Heart right ventricle (tissue), 16 donors: ENCODE measurements at regions of chr6 and their contacts with region 1.

Region 1: DNA sequence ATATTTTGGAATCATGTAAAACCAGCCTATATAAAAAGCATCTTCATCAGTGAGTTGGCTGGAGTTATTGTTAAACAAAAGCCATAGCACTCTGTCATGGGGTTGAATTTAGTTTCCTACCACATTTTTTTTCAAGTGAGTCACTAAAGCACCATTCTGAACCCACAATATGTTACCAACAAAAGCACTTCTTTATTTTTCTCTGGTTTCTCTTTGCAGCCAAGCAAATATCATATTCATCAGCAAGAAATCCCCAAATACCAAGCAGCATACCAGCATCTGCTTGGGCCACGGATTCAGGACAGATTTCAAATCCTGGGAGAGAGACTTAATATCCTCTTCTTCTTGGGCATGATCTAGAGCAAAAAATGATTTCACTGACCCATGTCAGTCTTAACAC is 441.4 kb downstream of the BCKDHB start:
- DNase-seq: no peak
- ATAC-seq: no peak
- H3K4me3 ChIP-seq: no peak overlapping the region
- H3K27ac ChIP-seq: peak overlapping the region in 1 of 10 donors; percentile 2
- H3K4me1 ChIP-seq: peaks cover 0 to 5% (median 0%) of the 10 kb centered on the region in 9 donors
- H3K27me3 ChIP-seq: no peaks in the 10 kb centered on the region
- CTCF ChIP-seq: no peak

Region 2: DNA sequence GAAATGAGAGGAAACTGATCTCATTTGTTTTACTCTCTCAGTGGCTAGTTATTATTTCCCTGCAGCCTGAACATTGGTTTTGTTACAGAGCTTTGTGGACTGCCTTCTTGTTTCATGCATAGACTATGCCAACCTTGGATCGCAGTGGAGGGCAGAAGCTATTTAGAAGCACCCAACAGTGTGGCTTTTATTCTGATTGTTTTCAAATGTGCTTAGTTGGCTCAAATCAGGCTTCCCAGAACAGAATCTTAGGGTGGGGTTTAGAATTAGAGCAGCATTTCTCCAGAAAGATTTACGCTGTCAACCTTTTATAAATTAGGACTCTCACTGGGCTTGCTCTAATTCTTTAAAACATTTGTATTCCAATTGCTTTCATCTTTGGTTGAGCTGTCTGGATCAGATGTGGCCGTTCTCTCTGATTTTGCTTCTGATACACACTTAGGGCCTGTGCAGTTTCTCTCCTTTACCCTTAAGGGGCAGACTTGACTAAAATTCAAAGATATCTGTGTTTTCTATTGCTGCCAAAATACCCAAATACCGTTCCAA is 231.1 kb before region 1 on chr6:
- intact Hi-C with region 1: no loop called
- DNase-seq: no peak
- ATAC-seq: no peak
- H3K4me3 ChIP-seq: no peak overlapping the region
- H3K27ac ChIP-seq: no peak overlapping the region
- H3K4me1 ChIP-seq: no peaks in the 10 kb centered on the region
- H3K27me3 ChIP-seq: no peaks in the 10 kb centered on the region
- CTCF ChIP-seq: no peak

Region 3: GRCh38 chr6:80566361-80566760 is 18.5 kb after region 1 on chr6:
- intact Hi-C with region 1: loop called in 1 of 10 experiments (anchors 1 kb)
- DNase-seq: no peak
- ATAC-seq: no peak
- H3K4me3 ChIP-seq: no peak overlapping the region
- H3K27ac ChIP-seq: no peak overlapping the region
- H3K4me1 ChIP-seq: no peaks in the 10 kb centered on the region
- H3K27me3 ChIP-seq: no peaks in the 10 kb centered on the region
- CTCF ChIP-seq: no peak